PC-3 (cell line): ENCODE measurements at regions of chr1 and their contacts with region 1.

Region 1: GRCh38 chr1:232635778-232636356 is 5.9 kb upstream of the SIPA1L2 start:
- DNase-seq: peak; percentile 85
- ATAC-seq: peak; percentile 89
- H3K4me3 ChIP-seq: no peak overlapping the region
- H3K27ac ChIP-seq: no peak overlapping the region
- H3K4me1 ChIP-seq: peaks cover 5% of the 10 kb centered on the region; the same call in 1 of the 2 replicates
- H3K27me3 ChIP-seq: no peaks in the 10 kb centered on the region
- CTCF ChIP-seq: peak; percentile 94

Region 2: DNA sequence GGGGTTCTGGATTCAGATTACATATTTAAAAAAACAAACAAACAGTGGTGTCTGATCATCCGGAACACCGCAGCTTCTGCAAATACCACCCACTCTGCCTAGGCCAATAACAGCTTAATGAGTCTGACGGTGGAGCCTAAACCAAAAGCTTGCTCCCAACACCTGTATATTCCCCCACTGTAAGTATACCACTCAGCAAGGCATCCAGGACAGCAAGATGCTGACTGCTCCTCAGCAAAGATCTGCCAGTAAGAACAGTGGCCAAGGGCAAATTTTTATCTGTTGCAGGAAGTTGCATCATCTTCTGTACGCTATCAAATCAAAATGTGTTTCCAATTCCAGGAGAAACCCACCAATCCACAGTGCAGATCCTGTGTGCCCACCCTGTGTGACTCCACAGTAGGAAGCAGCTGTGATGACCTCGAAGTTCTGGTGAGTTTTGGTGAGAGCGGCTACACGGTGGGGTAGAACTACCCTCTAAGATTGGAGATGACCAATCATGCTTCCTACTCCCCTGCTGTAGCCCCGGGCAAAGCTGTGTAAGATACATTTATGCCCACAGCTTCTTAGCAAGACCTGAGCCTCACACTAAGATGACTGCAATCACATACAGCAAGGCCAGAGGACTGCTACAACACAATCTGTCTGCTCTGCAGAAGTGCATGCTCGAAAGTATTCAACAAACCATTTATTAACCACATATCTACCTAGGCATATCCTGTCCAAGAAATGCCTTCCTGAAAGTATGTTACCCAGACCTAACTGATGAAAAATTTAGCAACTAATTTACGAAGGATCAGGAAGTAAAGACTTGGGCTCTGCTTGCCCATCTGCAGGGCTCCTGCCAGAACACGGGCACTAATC is 36.5 kb before region 1 on chr1:
- CTCF ChIA-PET with region 1: no interaction called
- POLR2A ChIA-PET with region 1: no interaction called
- intact Hi-C with region 1: no loop called
- DNase-seq: peak; percentile 22
- ATAC-seq: peak; percentile 46
- H3K4me3 ChIP-seq: no peak overlapping the region
- H3K27ac ChIP-seq: no peak overlapping the region
- H3K4me1 ChIP-seq: peaks cover 18% of the 10 kb centered on the region
- H3K27me3 ChIP-seq: no peaks in the 10 kb centered on the region
- CTCF ChIP-seq: no peak

Region 3: DNA sequence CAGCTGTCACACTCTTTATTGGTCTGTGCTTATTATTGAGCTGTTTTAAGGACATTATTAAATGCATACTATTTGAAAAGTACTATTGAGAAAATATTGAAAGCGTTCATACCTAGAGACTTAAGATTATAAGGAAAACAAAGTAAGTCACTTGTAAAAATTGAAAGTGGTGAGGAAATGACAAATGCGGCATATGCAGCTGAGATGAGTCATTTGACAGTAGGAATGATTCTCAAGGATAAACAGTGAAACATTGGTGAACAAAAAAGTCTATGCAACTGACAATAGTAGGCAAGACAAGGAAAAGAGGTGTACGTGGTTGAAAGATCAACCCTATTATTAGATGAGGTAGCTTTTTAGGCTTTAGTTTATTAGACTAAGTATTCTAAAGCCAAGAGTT is 86.8 kb after region 1 on chr1:
- CTCF ChIA-PET with region 1: no interaction called
- POLR2A ChIA-PET with region 1: no interaction called
- intact Hi-C with region 1: loop called (anchors 5 kb)
- DNase-seq: peak; percentile 66
- ATAC-seq: peak; percentile 43
- H3K4me3 ChIP-seq: no peak overlapping the region
- H3K27ac ChIP-seq: no peak overlapping the region
- H3K4me1 ChIP-seq: peaks cover 25% of the 10 kb centered on the region
- H3K27me3 ChIP-seq: no peaks in the 10 kb centered on the region
- CTCF ChIP-seq: no peak

Region 4: GRCh38 chr1:232793944-232794343 is 158.1 kb after region 1 on chr1:
- CTCF ChIA-PET with region 1: no interaction called
- POLR2A ChIA-PET with region 1: no interaction called
- intact Hi-C with region 1: loop called (anchors 1 kb)
- DNase-seq: peak; percentile 78
- ATAC-seq: peak; percentile 98
- H3K4me3 ChIP-seq: no peak overlapping the region
- H3K27ac ChIP-seq: no peak overlapping the region
- H3K4me1 ChIP-seq: peaks cover 12% of the 10 kb centered on the region
- H3K27me3 ChIP-seq: no peaks in the 10 kb centered on the region
- CTCF ChIP-seq: peak; percentile 50; the same call in 1 of the 2 replicates

Region 5: DNA sequence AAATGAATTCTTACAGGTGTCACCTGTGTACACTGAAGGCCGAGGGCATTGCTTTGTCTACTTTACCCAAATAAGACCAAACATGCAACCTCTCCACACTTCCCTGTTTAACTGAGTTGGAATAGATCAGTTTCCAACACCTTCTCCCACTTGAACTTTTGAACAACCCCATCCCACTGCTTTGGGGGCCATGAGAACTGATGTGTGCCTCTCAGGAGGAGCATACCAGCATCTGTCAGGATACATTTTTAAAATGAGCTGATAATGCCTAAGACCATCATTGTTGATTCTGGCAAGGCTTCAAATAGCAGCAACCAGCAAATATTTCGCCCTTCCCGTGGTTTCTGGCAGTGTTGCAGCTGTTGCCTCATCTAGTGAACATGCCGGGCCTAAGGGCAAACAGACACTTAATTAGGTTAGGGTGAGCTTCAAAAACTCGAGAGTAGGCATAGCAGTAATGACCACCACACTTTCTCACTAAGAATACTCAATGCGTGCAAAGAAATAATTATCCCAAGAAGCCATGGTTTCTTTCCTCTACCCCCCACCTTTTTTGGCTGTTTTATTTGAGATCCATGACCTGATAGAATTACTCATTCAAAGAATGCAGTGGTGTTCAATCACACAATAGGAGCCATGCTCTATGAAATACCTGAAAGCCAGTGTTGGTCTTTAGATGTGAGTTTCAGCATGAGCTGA is 233.1 kb after region 1 on chr1:
- CTCF ChIA-PET with region 1: no interaction called
- POLR2A ChIA-PET with region 1: no interaction called
- intact Hi-C with region 1: loop called (anchors 5 kb)
- DNase-seq: peak; percentile 97
- ATAC-seq: peak; percentile 81
- H3K4me3 ChIP-seq: no peak overlapping the region
- H3K27ac ChIP-seq: peak overlapping the region; percentile 80
- H3K4me1 ChIP-seq: peaks cover 31% of the 10 kb centered on the region
- H3K27me3 ChIP-seq: no peaks in the 10 kb centered on the region
- CTCF ChIP-seq: no peak

Region 6: DNA sequence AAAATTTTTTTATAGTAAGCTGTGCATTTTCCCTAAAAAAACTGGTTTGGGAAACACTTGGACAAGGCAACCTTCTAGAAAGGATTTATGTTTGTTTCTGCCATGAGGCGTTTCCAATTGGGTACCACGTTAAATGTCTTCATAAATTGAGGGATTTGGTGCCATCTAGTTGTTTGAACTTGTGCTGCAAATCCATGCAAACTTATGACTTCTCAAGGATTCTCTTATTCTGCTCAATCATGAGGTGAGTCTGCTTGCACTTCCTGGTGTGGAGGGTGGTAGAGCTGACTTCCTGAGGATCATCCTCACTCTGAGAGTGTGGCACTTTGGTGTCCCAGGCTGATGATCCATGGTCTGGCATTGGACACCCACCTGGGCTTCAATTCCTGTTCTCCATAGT is 536.4 kb after region 1 on chr1:
- CTCF ChIA-PET with region 1: no interaction called
- POLR2A ChIA-PET with region 1: no interaction called
- intact Hi-C with region 1: loop called (anchors 1 kb)
- DNase-seq: peak; percentile 89
- ATAC-seq: peak; percentile 75
- H3K4me3 ChIP-seq: no peak overlapping the region
- H3K27ac ChIP-seq: no peak overlapping the region
- H3K4me1 ChIP-seq: peaks cover 12% of the 10 kb centered on the region; the same call in 1 of the 2 replicates
- H3K27me3 ChIP-seq: no peaks in the 10 kb centered on the region
- CTCF ChIP-seq: peak; percentile 89

Region 7: DNA sequence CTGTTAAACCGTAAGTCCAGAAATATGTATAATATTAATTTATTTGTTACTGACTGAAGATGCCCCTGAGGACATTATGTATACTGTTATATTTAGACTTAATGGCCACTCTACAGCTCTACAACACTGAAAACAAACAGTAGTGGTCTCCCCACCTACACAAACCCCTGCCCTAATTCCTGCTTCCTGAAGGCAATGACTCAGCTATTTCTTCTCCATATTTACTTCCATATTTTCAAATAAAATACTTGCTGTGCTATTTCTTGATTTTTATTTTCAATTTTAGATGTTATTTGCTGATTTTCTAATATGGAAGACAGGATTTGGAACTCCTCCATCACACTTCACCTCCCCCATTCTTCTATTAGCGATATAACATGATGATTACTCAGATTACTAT is 562.1 kb after region 1 on chr1:
- CTCF ChIA-PET with region 1: interaction called, 10 read pairs
- POLR2A ChIA-PET with region 1: no interaction called
- intact Hi-C with region 1: no loop called
- DNase-seq: peak; percentile 32
- ATAC-seq: no peak
- H3K4me3 ChIP-seq: no peak overlapping the region
- H3K27ac ChIP-seq: peak overlapping the region; percentile 29
- H3K4me1 ChIP-seq: peaks cover 18% of the 10 kb centered on the region
- H3K27me3 ChIP-seq: no peaks in the 10 kb centered on the region
- CTCF ChIP-seq: no peak